Mammary epithelial cell (primary cell): ENCODE measurements at regions of chr3 and their contacts with region 1.

Region 1: DNA sequence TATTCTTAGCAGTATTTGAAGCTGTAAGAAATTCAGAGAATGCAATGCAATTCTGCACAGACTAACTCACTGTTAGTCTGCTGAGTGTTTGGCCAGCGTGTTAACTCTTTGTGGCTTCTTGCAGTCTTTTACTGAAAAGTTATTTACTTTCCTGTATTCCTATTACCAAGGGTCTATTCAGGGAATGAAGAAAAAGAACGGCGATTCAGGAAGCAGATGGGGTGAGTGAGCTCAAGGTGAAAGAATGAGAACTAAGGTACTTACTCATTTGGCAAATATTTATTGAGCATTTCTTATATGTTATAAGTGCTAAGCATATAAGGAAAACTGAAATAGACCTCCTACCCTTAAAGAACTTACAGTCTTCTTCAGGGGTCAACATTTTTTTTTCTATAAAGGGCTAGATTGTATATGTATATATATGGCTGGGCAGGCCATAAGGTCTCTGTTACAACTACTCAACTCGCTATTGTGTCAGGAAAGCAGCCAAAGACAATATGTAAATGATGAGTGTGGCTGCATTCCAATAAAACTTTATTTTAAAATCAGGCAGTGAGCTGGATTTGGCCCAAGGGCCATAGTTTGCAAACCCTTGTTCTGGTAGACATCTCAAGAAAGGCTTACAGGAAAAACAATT is 271.9 kb upstream of the GADL1 start:
- DNase-seq: peak; percentile 50
- H3K4me3 ChIP-seq: no peak overlapping the region
- H3K27ac ChIP-seq: no peak overlapping the region
- H3K4me1 ChIP-seq: peaks cover 25% of the 10 kb centered on the region
- H3K27me3 ChIP-seq: no peaks in the 10 kb centered on the region
- CTCF ChIP-seq: no peak

Region 2: DNA sequence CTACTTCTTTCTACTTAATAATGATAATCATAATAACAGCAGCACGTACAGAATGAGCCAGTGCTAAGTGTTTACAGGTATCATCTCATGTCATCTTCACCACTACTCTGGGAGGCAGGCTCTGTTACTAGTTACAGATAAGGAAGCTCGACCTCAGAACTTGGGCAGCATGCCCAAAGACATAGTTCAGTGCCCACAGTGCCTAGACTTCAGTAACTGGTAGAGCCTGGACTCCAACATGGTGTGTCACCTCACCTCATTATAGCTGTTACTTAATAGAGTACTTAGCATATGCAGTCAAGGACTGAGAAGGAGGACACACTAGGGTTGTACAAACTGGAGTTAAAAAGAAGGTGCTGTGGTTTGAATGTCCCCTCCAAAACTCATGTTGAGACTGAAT is 279.5 kb before region 1 on chr3:
- CTCF ChIA-PET with region 1: no interaction called
- dilution Hi-C with region 1: no loop called
- in situ Hi-C with region 1: no loop called
- intact Hi-C with region 1: no loop called
- DNase-seq: no peak
- H3K4me3 ChIP-seq: no peak overlapping the region
- H3K27ac ChIP-seq: no peak overlapping the region
- H3K4me1 ChIP-seq: no peaks in the 10 kb centered on the region
- H3K27me3 ChIP-seq: peaks cover 4% of the 10 kb centered on the region
- CTCF ChIP-seq: no peak

Region 3: GRCh38 chr3:31067009-31067408 is 99.4 kb before region 1 on chr3:
- CTCF ChIA-PET with region 1: no interaction called
- dilution Hi-C with region 1: no loop called
- in situ Hi-C with region 1: no loop called
- intact Hi-C with region 1: no loop called
- DNase-seq: peak; percentile 96
- H3K4me3 ChIP-seq: no peak overlapping the region
- H3K27ac ChIP-seq: no peak overlapping the region
- H3K4me1 ChIP-seq: peaks cover 15% of the 10 kb centered on the region
- H3K27me3 ChIP-seq: no peaks in the 10 kb centered on the region
- CTCF ChIP-seq: no peak

Region 4: DNA sequence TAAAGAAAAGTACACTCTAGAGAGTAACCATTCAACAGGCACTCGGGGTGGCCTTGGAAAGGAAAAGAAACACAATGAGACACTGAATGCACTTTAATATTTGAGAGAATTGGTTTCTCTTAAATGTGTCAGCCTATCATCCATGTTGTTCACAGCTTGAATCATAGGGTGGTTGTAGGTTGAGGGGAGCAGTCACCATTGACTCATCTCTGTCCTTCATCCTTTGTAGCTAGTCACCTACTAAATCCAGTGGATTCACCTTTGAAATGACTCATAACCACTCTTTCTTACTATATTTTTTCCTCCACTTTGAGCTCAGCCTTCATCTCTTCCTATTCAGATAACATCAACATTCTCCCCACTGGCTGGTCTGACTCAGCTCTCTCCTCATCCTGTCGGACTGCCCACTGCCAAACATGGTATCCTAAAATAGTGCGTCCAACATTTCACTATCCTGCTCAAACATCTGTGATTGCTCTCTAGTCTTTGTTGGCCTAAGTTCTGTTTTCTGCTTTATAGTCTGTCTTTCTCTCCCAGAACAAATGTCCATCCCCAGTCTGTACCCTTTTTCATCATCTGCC is 89.3 kb before region 1 on chr3:
- CTCF ChIA-PET with region 1: no interaction called
- dilution Hi-C with region 1: no loop called
- in situ Hi-C with region 1: no loop called
- intact Hi-C with region 1: no loop called
- DNase-seq: peak; percentile 99
- H3K4me3 ChIP-seq: no peak overlapping the region
- H3K27ac ChIP-seq: peak overlapping the region; percentile 78
- H3K4me1 ChIP-seq: peaks cover 39% of the 10 kb centered on the region
- H3K27me3 ChIP-seq: no peaks in the 10 kb centered on the region
- CTCF ChIP-seq: no peak

Region 5: GRCh38 chr3:31185062-31185357 is 18.6 kb after region 1 on chr3:
- CTCF ChIA-PET with region 1: no interaction called
- dilution Hi-C with region 1: no loop called
- in situ Hi-C with region 1: no loop called
- intact Hi-C with region 1: no loop called
- DNase-seq: no peak
- H3K4me3 ChIP-seq: no peak overlapping the region
- H3K27ac ChIP-seq: no peak overlapping the region
- H3K4me1 ChIP-seq: no peaks in the 10 kb centered on the region
- H3K27me3 ChIP-seq: no peaks in the 10 kb centered on the region
- CTCF ChIP-seq: no peak

Region 6: DNA sequence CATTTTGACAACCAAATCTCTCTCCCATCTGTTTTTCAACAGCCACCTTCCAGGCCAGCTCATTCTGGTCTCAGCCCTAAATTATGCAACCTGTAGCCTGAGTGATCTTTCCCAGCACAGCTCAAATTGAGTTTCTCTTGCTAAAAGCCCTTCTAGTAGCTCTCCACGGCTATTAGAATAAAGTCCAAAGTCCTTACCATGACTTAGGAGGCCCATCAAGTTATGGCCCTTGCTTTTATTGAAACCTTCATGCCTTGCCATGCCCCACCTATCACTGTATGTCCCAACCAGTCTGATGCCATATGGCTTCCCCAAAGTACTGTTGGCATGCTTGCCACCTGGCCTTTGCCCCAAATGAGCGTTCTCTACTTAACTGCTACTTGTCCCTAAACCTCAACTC is 31.6 kb after region 1 on chr3:
- CTCF ChIA-PET with region 1: interaction called, 18 read pairs
- dilution Hi-C with region 1: no loop called
- in situ Hi-C with region 1: no loop called
- intact Hi-C with region 1: no loop called
- DNase-seq: peak; percentile 23
- H3K4me3 ChIP-seq: no peak overlapping the region
- H3K27ac ChIP-seq: no peak overlapping the region
- H3K4me1 ChIP-seq: peaks cover 16% of the 10 kb centered on the region
- H3K27me3 ChIP-seq: no peaks in the 10 kb centered on the region
- CTCF ChIP-seq: no peak